Esophagus muscularis mucosa (tissue), 4 donors: ENCODE measurements at regions of chr3 and their contacts with region 1.

Region 1: DNA sequence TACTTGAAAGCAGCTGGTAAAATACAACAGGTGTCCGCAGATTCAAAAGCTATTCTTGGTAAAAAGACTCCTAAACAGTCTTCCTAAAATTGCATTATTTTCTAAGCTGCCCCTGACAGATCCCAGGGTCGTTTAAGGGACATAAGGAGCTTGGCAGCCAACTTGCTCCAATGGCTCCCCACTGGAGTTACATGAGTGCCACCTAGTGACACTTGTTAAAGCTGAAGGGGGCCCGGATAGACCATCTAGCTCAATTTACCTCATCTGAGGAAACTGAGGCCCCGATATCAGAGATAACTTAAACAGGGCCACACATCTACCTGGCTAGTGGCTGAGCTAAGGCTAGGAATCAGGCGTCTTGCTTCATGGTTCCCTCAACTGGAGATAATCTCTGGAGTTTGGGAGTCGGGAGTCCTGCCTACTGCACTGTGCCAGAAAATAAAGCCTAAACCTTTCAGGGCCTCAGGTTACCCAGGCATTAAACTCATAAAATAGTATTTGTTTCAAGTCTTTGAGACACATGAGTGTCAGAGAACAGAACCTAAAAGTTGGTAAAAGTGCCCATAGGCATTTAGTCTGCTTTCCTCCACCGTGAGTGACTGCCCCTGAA is 6.5 kb upstream of the TBC1D23 start:
- DNase-seq: no peak
- H3K4me3 ChIP-seq: no peak overlapping the region
- H3K27ac ChIP-seq: peak overlapping the region; percentile 45 to 70 (median 57)
- H3K4me1 ChIP-seq: peaks cover 11 to 27% (median 12%) of the 10 kb centered on the region in 4 donors
- H3K27me3 ChIP-seq: no peaks in the 10 kb centered on the region
- CTCF ChIP-seq: peak; percentile 74 to 85 (median 82)
- EP300 ChIP-seq: no peak
- POLR2A ChIP-seq: no peak

Region 2: GRCh38 chr3:99842826-99843589 is 411.3 kb before region 1 on chr3:
- intact Hi-C with region 1: loop called (anchors 2 kb)
- DNase-seq: no peak
- H3K4me3 ChIP-seq: peak overlapping the region in 2 of 4 donors; percentile 4 to 24
- H3K27ac ChIP-seq: peak overlapping the region; percentile 78 to 85 (median 80)
- H3K4me1 ChIP-seq: peaks cover 49 to 55% (median 54%) of the 10 kb centered on the region in 4 donors
- H3K27me3 ChIP-seq: no peaks in the 10 kb centered on the region
- CTCF ChIP-seq: peak; percentile 74 to 85 (median 76)
- EP300 ChIP-seq: no peak
- POLR2A ChIP-seq: no peak

Region 3: DNA sequence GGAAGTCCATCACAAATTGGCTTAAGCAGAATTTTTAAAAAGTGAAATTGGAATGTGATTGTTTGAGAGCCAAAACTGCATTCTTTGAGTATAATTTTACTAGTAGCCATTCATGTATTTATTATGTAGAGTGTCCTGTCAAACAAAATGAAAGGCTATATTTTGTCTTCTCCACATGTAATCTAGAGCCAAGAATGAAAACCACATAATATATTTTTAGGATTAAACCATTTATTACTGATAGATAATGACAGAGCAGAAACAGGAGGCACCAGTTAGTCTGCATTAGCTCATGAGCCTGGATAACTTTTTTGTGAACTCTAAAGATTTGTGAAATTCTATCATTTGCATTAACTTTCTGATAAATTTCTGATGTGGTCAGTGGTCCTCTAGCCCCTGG is 270.1 kb before region 1 on chr3:
- intact Hi-C with region 1: no loop called
- DNase-seq: no peak
- H3K4me3 ChIP-seq: no peak overlapping the region
- H3K27ac ChIP-seq: no peak overlapping the region
- H3K4me1 ChIP-seq: no peaks in the 10 kb centered on the region
- H3K27me3 ChIP-seq: no peaks in the 10 kb centered on the region
- CTCF ChIP-seq: no peak
- EP300 ChIP-seq: no peak
- POLR2A ChIP-seq: no peak

Region 4: GRCh38 chr3:100068826-100069225 is 185.4 kb before region 1 on chr3:
- intact Hi-C with region 1: loop called (anchors 5 kb)
- DNase-seq: no peak
- H3K4me3 ChIP-seq: no peak overlapping the region
- H3K27ac ChIP-seq: peak overlapping the region in 2 of 4 donors; percentile 16 to 51
- H3K4me1 ChIP-seq: peaks cover 13 to 38% (median 31%) of the 10 kb centered on the region in 4 donors
- H3K27me3 ChIP-seq: no peaks in the 10 kb centered on the region
- CTCF ChIP-seq: peak; percentile 73 to 78 (median 74)
- EP300 ChIP-seq: no peak
- POLR2A ChIP-seq: no peak